IMR-90 (cell line): ENCODE measurements at regions of chr5 and their contacts with region 1.

Region 1: DNA sequence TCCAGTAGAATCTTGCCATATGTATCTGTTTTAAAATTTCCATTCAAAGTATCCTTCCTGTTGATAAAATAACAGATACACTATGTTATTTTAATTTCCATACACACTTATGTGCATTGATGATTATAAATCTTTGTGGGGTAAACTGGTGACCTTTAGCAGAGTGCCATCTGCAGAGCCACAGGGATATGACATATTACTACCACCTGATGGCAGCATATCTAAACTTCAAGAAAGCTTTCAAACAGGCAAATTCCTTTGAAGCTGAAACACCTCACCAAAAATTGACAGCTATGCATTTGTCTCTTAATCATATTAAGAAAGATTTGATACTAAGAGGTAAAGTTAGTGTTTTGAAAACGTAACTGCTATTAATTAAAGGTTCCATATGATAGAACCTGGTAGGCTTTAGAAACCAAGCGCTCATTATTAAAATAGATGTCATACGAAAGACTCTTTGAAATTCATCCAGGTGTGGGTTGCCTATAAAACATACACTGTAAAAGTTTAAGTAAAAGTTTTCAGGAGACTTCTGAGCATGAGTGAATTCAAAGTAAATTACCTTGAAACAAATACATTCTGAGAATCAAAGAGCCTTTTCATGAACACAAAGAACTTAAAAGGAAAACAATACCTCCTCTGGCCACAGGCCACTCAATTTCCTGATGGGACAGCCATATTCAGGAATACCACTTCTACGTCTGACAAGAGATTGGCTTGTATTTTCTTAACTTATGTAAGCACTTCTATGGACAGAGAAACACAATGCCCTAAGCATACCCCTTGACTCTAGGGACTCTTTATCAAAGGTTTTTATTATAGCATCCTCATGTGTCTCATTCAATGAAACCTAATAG is 93.3 kb downstream of the KIAA0825 start:
- DNase-seq: peak; percentile 30
- ATAC-seq: peak; percentile 59; the same call in 1 of the 2 replicates
- H3K4me3 ChIP-seq: no peak overlapping the region
- H3K27ac ChIP-seq: no peak overlapping the region
- H3K4me1 ChIP-seq: no peaks in the 10 kb centered on the region; the same call in 1 of the 2 replicates
- H3K27me3 ChIP-seq: no peaks in the 10 kb centered on the region
- CTCF ChIP-seq: peak; percentile 45
- POLR2A ChIP-seq: no peak
- RAD21 ChIP-seq: peak; percentile 45

Region 2: DNA sequence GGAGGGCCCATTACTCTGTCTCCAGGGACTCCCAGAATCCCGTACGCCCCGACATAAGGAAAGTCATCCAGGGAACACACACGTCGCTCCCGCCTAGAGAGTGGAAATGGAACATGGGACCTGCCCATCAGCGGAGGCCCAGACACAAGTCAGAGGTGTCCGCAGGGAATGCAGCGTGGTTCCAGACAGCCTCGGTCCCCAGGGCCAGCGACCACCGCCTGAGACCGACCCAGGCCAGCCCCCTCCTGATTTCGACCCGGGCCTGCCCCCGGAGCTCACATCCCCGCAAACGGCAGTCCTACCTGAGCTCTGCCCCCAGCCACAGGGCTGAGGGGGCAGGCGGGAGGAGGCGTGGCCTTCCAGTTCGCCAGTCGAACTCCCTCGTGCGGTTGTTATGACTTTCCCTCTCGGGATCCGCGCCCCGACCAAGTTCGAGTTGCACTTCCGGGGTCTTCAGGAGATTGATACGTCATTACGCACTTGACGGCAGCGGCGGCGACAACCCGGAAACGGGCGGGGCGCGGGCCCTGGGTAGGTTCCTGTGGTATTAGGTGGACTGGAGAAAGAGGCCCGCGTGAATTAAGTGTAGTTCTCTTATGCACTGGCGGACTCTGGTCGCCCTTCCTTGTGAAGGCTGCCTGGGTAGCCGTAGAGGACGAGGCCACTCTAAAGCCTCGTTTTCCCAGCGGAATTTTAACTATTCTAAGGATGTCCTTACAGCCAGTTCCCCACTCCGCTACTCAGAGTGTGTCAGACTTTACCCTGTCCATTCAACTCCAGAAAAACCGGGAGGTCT is 413.7 kb before region 1 on chr5:
- CTCF ChIA-PET with region 1: no interaction called
- POLR2A ChIA-PET with region 1: no interaction called
- dilution Hi-C with region 1: no loop called
- in situ Hi-C with region 1: no loop called
- intact Hi-C with region 1: loop called (anchors 2 kb)
- DNase-seq: peak; percentile 95
- ATAC-seq: peak; percentile 97
- H3K4me3 ChIP-seq: peak overlapping the region; percentile 92
- H3K27ac ChIP-seq: peak overlapping the region; percentile 76
- H3K4me1 ChIP-seq: no peaks in the 10 kb centered on the region
- H3K27me3 ChIP-seq: no peaks in the 10 kb centered on the region
- CTCF ChIP-seq: peak; percentile 22; the same call in 1 of the 2 replicates
- POLR2A ChIP-seq: peak; percentile 60; the same call in 1 of the 2 replicates
- RAD21 ChIP-seq: no peak

Region 3: GRCh38 chr5:94268226-94268625 is 256.8 kb before region 1 on chr5:
- CTCF ChIA-PET with region 1: no interaction called
- POLR2A ChIA-PET with region 1: no interaction called
- dilution Hi-C with region 1: no loop called
- in situ Hi-C with region 1: no loop called
- intact Hi-C with region 1: no loop called
- DNase-seq: no peak
- ATAC-seq: no peak
- H3K4me3 ChIP-seq: no peak overlapping the region
- H3K27ac ChIP-seq: no peak overlapping the region
- H3K4me1 ChIP-seq: no peaks in the 10 kb centered on the region
- H3K27me3 ChIP-seq: no peaks in the 10 kb centered on the region
- CTCF ChIP-seq: no peak
- POLR2A ChIP-seq: no peak
- RAD21 ChIP-seq: no peak